WTC11 (cell line): ENCODE measurements at regions of chr22 and their contacts with region 1.

Region 1: DNA sequence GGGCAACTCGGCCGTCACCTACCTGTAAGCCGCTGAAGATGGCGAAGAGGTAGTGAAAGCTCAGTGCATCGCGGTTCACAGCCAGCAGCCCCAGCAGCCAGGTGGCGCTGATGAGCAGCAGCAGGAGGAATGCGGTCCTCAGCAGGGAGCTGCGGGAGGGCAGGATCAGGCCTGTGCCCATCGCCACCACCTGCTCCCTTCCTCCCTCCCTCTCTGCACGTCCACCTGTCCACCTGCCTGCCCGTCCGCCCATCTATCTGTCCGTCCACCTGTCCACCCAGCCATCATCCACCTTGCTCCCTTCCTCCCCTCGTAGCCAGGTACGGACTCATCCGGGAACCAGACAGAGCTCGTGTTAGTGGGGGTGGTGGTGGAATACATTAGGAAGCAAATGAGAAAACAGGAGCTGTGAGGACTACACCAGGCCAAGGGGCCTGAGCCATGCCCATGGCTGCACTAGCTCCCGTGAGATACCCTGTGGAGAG is 32.2 kb downstream of the TRMU start:
- DNase-seq: peak; percentile 94
- ATAC-seq: peak; percentile 87
- H3K4me3 Mint-ChIP-seq: no peak overlapping the region
- H3K27ac Mint-ChIP-seq: no peak overlapping the region; the same call in 1 of the 2 replicates
- H3K4me1 Mint-ChIP-seq: peaks cover 6% of the 10 kb centered on the region; the same call in 1 of the 2 replicates
- H3K27me3 Mint-ChIP-seq: no peaks in the 10 kb centered on the region
- CTCF ChIP-seq: peak; percentile 85

Region 2: GRCh38 chr22:46377566-46378425 is 10.0 kb after region 1 on chr22:
- CTCF ChIA-PET with region 1: interaction called, 54 read pairs
- POLR2A ChIA-PET with region 1: no interaction called
- DNase-seq: peak; percentile 56
- ATAC-seq: peak; percentile 65
- H3K4me3 Mint-ChIP-seq: peak overlapping the region; percentile 27; the same call in 1 of the 2 replicates
- H3K27ac Mint-ChIP-seq: peak overlapping the region; percentile 80
- H3K4me1 Mint-ChIP-seq: peaks cover 34% of the 10 kb centered on the region
- H3K27me3 Mint-ChIP-seq: no peaks in the 10 kb centered on the region
- CTCF ChIP-seq: no peak

Region 3: DNA sequence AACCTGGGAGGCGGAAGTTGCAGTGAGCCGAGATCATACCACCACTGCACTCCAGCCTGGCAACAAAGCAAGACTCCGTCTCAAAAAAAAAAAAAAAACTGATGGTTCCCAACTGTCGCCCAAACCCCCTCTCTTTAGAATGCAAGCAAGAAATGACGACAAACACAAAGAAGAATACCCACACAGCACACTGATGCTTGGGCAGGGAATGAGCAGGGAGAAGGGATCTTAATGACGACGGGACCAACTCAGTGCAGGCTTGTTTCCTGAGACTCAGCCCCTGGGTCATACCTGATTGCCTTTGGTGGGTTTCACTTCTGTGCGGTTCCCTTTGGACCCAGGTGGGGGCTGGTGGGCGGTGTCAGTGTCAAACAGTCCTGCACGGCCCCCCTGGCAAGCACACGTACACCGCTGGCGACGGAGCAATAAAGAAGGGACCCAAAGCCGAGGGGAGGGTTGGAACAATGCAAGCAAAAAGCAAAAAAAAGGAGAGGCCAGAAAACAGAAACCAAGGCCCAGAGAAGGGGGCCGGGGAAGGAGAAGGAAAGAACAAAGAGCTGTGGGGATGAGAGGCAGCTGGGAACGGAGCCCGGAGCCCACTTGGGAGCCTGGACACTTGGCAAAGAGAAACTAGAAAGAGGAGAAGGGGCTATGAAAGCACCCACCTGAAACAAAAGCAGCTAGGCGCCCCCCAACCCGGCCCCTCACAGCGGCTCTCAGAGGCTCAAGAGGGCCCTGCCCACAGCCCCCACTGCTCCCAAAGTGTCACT is 70.1 kb after region 1 on chr22:
- CTCF ChIA-PET with region 1: interaction called, 10 read pairs
- POLR2A ChIA-PET with region 1: no interaction called
- DNase-seq: no peak
- ATAC-seq: no peak
- H3K4me3 Mint-ChIP-seq: no peak overlapping the region
- H3K27ac Mint-ChIP-seq: peak overlapping the region; percentile 83
- H3K4me1 Mint-ChIP-seq: peaks cover 6% of the 10 kb centered on the region; the same call in 1 of the 2 replicates
- H3K27me3 Mint-ChIP-seq: no peaks in the 10 kb centered on the region
- CTCF ChIP-seq: no peak

Region 4: DNA sequence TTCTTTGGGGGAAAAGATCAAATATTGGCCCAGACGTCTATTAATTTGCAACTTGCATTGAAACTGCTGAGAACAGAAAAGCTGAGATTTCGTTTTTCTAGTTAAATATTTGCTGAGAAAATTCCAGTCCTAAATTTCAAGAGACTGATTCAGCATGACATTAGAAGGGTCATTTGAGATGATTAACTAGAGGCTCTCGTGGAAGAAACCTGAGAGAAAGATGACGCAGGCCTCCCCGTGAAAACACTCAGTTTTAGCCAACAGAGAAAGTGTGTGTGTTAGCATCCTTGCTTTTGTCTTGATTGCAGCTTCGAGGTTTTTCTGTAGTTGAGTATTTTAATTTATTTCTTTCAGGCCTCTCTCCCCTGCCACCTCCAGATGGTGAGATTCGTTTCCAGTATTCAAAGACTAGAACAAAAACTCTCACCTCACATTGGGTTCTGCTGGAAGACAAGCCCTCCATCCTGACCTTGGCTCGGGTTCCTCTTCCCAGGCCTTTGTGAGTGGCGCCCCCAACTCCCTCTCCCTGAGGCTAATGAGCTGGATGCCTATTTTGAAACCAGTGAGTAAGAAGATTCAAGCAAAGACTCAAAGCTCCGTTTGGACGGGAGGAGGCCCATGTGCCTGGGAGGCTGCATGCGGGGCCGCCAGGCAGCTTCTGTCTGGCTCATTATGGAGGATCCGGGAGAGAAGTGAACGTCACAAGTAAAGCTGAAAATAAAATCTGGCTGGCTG is 117.3 kb after region 1 on chr22:
- CTCF ChIA-PET with region 1: interaction called, 17 read pairs
- POLR2A ChIA-PET with region 1: no interaction called
- DNase-seq: no peak
- ATAC-seq: peak; percentile 36; the same call in 1 of the 2 replicates
- H3K4me3 Mint-ChIP-seq: no peak overlapping the region
- H3K27ac Mint-ChIP-seq: peak overlapping the region; percentile 84
- H3K4me1 Mint-ChIP-seq: peaks cover 28% of the 10 kb centered on the region
- H3K27me3 Mint-ChIP-seq: no peaks in the 10 kb centered on the region
- CTCF ChIP-seq: no peak

Region 5: GRCh38 chr22:46533434-46533833 is 165.7 kb after region 1 on chr22:
- CTCF ChIA-PET with region 1: interaction called, 67 read pairs
- POLR2A ChIA-PET with region 1: interaction called, 3 read pairs
- DNase-seq: peak; percentile 38
- ATAC-seq: no peak
- H3K4me3 Mint-ChIP-seq: no peak overlapping the region
- H3K27ac Mint-ChIP-seq: no peak overlapping the region
- H3K4me1 Mint-ChIP-seq: peaks cover 7% of the 10 kb centered on the region
- H3K27me3 Mint-ChIP-seq: peaks cover 33% of the 10 kb centered on the region
- CTCF ChIP-seq: no peak

Region 6: DNA sequence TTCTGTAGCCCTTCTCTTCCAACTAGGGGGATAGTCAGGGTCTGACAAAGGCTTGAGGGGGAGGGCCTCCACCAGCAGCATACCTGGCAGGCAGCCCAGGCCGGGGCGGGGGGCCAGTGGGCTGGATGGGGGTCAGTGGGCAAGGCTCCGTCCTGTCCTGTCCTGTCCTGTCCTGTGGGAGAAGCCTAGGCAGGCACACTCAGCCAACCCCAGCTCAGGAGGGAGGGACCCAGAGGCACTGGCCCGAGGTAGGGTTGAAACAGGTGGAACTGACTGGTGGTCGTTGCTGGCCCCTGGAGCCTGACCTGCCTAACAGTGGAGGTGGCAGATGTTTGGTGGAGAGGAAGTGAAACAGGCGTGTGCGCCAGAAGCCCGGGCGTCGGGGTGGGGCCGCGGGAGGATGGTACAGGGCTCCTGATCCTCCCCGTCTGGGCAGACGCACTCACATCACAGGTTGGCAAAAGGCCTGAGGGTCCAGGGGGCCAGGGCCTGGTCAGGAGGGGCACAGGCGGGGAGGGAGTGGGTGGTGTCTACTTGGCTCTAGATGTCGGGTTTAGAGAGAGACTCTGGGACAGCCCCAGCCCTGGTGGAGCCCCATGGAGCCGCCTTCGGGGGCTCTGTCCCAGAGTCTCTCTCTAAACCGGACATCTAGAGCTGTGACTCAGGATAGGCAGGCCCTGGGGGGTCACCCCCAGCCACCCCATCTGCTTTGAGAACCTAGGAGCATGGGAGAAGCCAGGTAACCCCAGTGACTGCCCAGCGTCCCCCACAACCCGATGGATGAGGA is 219.9 kb after region 1 on chr22:
- CTCF ChIA-PET with region 1: interaction called, 12 read pairs
- POLR2A ChIA-PET with region 1: no interaction called
- DNase-seq: peak; percentile 13
- ATAC-seq: no peak
- H3K4me3 Mint-ChIP-seq: no peak overlapping the region
- H3K27ac Mint-ChIP-seq: peak overlapping the region; percentile 32; the same call in 1 of the 2 replicates
- H3K4me1 Mint-ChIP-seq: peaks cover 40% of the 10 kb centered on the region
- H3K27me3 Mint-ChIP-seq: no peaks in the 10 kb centered on the region
- CTCF ChIP-seq: no peak